ENCODE measurements at regions of chr20 and their contacts with region 1.

Region 1: GRCh38 chr20:21571841-21572690 is 58.2 kb upstream of the NKX2-2 start:
- DNase-seq: peak; percentile 25
- ATAC-seq: no peak
- H3K4me3 Mint-ChIP-seq: no peak overlapping the region
- H3K27ac Mint-ChIP-seq: no peak overlapping the region
- H3K4me1 Mint-ChIP-seq: peaks cover 6% of the 10 kb centered on the region
- H3K27me3 Mint-ChIP-seq: peaks cover 12% of the 10 kb centered on the region

Region 2: DNA sequence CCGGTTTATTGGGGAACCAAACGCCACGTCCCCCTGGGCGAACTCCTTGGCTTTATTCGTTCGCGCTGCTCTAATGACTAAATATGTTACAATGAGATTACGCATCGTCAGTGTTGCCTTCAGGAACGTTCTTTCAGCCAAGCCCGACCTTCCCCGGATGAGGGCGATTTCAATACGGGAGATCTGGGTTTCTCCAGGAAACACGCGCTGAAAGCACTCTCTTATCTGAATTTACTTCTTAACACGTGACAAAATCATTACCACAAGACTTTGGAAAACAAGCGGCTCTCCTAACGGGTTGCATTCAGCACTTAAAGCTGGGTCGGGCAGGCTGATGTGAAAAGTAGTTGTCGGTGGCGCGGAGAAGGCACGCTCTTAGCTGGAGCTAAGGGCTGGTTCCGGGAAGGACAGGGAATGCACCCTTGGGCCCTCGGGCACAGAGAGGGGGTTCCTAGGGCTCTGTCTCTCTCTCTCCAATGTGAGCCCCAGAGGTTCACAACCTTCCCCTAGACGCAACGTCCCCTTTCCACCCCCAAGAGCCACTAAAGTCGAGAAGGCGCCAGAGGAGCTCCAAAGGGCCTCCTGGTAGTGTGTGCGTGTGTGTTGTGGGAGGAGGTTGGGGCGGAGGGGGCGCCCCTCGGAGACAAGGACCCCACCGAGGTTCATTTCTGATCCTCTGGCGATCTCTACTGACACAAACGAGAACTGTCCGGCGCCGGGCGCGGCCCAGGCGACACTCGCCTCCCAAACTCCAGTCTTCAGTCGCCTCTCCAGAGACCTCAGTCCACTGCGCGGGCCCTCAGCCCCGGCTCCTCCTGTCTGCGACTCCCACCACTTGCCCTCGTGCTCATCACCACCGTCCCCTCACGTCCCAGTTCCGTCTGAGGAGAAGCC is 51.1 kb before region 1 on chr20:
- CTCF ChIA-PET with region 1: interaction called, 16 read pairs
- POLR2A ChIA-PET with region 1: no interaction called
- intact Hi-C with region 1: no loop called
- DNase-seq: peak; percentile 23
- ATAC-seq: no peak
- H3K4me3 Mint-ChIP-seq: no peak overlapping the region
- H3K27ac Mint-ChIP-seq: no peak overlapping the region
- H3K4me1 Mint-ChIP-seq: peaks cover 26% of the 10 kb centered on the region
- H3K27me3 Mint-ChIP-seq: peaks cover 86% of the 10 kb centered on the region

Region 3: DNA sequence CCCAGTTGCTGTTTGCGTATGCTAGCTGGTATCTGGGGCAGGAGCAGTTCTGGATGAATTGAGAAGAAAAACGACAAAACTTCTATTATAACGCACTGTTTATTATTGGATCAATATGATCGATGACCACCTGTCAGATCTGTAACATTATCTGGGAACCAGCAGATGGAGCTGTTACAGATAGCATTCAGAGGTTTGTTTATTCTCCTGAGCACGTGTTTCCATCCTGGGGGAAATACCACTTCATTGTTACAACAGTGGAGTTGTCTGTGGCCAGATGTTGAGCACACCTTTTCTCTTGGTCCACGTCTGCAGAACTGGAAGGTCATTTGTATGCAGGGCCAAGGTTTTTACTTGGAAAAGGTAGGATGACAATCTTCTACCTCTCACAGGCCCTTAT is 42.2 kb before region 1 on chr20:
- CTCF ChIA-PET with region 1: interaction called, 31 read pairs
- POLR2A ChIA-PET with region 1: no interaction called
- intact Hi-C with region 1: loop called (anchors 1 kb)
- DNase-seq: no peak
- ATAC-seq: no peak
- H3K4me3 Mint-ChIP-seq: no peak overlapping the region
- H3K27ac Mint-ChIP-seq: no peak overlapping the region
- H3K4me1 Mint-ChIP-seq: peaks cover 2% of the 10 kb centered on the region
- H3K27me3 Mint-ChIP-seq: peaks cover 41% of the 10 kb centered on the region

Region 4: GRCh38 chr20:21548390-21549035 is 23.6 kb before region 1 on chr20:
- CTCF ChIA-PET with region 1: interaction called, 4 read pairs
- POLR2A ChIA-PET with region 1: no interaction called
- intact Hi-C with region 1: loop called in 1 of 2 experiments (anchors 1 kb)
- DNase-seq: peak; percentile 71
- ATAC-seq: peak; percentile 88
- H3K4me3 Mint-ChIP-seq: peak overlapping the region; percentile 32
- H3K27ac Mint-ChIP-seq: peak overlapping the region; percentile 64
- H3K4me1 Mint-ChIP-seq: peaks cover 38% of the 10 kb centered on the region
- H3K27me3 Mint-ChIP-seq: no peaks in the 10 kb centered on the region

Region 5: GRCh38 chr20:21559305-21559704 is 12.8 kb before region 1 on chr20:
- CTCF ChIA-PET with region 1: interaction called, 13 read pairs
- POLR2A ChIA-PET with region 1: no interaction called
- intact Hi-C with region 1: no loop called
- DNase-seq: peak; percentile 58
- ATAC-seq: peak; percentile 70
- H3K4me3 Mint-ChIP-seq: peak overlapping the region; percentile 41
- H3K27ac Mint-ChIP-seq: no peak overlapping the region
- H3K4me1 Mint-ChIP-seq: peaks cover 46% of the 10 kb centered on the region
- H3K27me3 Mint-ChIP-seq: peaks cover 11% of the 10 kb centered on the region

Region 6: DNA sequence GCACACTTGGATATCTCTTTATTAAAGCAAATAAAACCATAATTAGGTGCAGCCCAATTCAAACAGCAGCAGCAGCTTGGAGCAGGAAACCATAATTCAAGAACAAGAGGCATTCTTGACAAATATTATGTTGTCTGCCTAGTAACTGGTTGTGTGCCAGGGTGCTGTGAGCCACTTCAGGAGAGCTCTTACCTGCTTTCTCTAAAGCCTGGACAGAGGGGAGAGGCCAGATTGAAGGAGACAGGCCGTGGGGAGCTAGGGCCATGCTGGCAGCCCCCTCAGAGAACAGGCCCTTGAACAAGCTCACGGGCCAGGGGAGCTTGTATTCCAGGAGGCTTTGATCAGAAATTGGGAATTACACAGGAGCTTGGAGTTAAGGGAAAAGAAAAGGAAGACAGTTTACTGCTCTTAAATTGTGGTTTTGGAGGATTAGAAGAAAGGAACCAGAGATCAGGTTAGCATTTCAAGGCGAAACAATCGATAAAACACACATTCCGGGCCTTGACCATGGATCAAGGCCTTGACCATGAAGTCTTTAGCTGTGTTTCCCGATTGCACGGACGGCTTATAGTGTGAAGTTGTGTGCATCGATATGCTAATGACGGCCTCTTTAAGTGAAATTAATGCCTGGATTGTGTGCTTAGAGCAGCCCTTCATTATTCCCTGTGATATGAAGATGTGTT is 11.6 kb after region 1 on chr20:
- CTCF ChIA-PET with region 1: interaction called, 20 read pairs
- POLR2A ChIA-PET with region 1: no interaction called
- intact Hi-C with region 1: no loop called
- DNase-seq: no peak
- ATAC-seq: no peak
- H3K4me3 Mint-ChIP-seq: no peak overlapping the region
- H3K27ac Mint-ChIP-seq: no peak overlapping the region
- H3K4me1 Mint-ChIP-seq: no peaks in the 10 kb centered on the region
- H3K27me3 Mint-ChIP-seq: peaks cover 18% of the 10 kb centered on the region